ENCODE measurements at regions of chr7 and their contacts with region 1.

Region 1: GRCh38 chr7:102404005-102404861 is 8.1 kb downstream of the PRKRIP1 start:
- DNase-seq: peak; percentile 82
- H3K4me3 ChIP-seq: no peak overlapping the region
- H3K27ac ChIP-seq: no peak overlapping the region
- H3K4me1 ChIP-seq: no peaks in the 10 kb centered on the region
- H3K27me3 ChIP-seq: no peaks in the 10 kb centered on the region
- CTCF ChIP-seq: peak; percentile 79
- EP300 ChIP-seq: no peak
- RAD21 ChIP-seq: peak; percentile 77

Region 2: DNA sequence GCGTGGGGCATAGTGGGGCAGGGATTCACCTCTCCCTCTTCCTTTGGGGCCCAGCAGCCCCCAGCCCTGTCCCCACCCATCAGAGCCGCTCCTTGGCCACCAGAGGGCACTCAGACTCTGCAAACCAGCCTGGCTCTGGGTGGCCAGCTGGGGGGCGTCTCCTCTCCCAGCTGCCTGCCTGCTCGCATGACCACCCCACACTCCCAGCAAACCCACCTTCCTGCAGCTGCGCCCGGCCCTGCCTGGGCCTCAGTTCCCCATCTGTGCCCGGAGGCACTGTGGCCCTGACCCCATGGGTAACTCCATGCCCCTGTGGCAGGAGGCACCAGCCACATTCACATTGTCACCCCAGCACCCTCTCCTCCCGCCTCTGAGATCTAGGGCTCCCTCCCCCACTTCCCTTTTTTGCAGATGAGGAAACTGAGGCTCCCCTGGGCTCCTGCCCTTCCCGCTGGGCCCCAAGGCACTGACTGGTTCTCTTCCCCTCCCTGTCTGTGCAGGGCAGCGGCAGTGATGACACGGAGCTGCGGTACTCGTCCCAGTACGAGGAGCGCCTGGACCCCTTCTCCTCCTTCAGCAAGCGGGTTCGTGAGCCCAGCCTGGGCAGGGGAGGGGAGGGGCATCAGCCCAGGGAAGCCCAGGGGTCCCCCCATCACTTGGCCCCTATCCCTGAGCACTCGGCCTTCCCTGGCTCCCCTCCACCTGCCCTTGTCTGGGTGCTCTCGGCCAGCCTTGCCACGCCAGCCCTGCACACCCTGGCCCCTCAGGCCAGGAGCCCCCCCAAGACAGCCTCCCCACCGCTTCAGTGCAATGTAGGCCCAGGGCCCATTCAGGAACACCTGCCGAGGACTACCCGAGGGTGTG is 124.5 kb before region 1 on chr7:
- CTCF ChIA-PET with region 1: interaction called, 421 read pairs
- POLR2A ChIA-PET with region 1: no interaction called
- DNase-seq: peak; percentile 98
- H3K4me3 ChIP-seq: no peak overlapping the region; a peak in 1 of 4 replicates
- H3K27ac ChIP-seq: no peak overlapping the region; a peak in 1 of 4 replicates
- H3K4me1 ChIP-seq: peaks cover 0 to 6% of the 10 kb centered on the region in 2 experiments; a peak in 1 of 4 replicates
- H3K27me3 ChIP-seq: no peaks in the 10 kb centered on the region
- CTCF ChIP-seq: peak; percentile 99
- EP300 ChIP-seq: no peak
- RAD21 ChIP-seq: peak; percentile 94

Region 3: DNA sequence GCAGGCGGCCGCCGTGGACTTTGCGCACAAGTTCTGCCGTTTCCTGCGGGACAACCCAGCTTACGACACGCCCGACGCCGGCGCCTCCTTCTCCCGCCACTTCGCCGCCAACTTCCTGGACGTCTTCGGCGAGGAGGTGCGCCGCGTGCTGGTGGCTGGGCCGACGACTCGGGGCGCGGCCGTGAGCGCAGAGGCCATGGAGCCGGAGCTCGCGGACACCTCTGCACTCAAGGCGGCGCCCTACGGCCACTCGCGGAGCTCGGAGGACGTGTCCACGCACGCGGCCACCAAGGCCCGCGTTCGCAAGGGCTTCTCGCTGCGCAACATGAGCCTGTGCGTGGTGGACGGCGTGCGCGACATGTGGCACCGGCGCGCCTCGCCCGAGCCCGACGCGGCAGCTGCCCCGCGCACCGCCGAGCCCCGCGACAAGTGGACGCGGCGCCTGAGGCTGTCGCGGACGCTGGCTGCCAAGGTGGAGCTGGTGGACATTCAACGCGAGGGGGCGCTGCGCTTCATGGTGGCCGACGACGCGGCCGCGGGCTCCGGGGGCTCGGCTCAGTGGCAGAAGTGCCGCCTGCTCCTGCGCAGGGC is 103.5 kb before region 1 on chr7:
- CTCF ChIA-PET with region 1: no interaction called
- POLR2A ChIA-PET with region 1: no interaction called
- DNase-seq: no peak
- H3K4me3 ChIP-seq: no peak overlapping the region; a peak in 1 of 4 replicates
- H3K27ac ChIP-seq: no peak overlapping the region
- H3K4me1 ChIP-seq: peaks cover 0 to 5% of the 10 kb centered on the region in 2 experiments; a peak in 1 of 4 replicates
- H3K27me3 ChIP-seq: no peaks in the 10 kb centered on the region
- CTCF ChIP-seq: no peak
- EP300 ChIP-seq: no peak
- RAD21 ChIP-seq: no peak

Region 4: DNA sequence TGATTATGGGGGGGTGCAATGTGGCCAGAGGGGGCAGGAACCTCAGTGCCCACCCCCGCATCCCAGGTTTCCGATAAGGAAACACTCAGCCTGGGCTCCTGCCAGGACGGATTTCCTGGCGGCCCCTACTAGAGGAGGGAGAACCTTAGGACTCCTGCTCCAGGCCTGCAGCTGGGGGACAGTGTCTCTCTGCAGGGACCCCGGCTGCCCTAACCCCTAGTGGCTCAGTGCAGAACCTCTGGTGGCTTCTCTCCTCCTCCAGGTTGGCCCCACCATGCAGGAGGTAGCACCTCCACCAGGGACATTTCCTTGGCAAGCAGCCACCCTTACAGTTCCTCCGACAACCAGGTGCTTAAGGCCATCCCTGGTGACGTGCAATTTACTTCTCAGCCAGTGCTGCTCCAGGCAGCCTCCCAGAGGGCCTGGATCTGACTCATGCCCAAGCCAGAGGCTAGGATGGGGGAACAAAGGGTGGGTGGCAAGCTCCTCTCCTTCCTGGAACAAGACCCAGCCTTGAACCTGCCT is 85.7 kb before region 1 on chr7:
- CTCF ChIA-PET with region 1: no interaction called
- POLR2A ChIA-PET with region 1: no interaction called
- DNase-seq: peak; percentile 59
- H3K4me3 ChIP-seq: no peak overlapping the region
- H3K27ac ChIP-seq: no peak overlapping the region; a peak in 1 of 4 replicates
- H3K4me1 ChIP-seq: peaks cover 0 to 4% of the 10 kb centered on the region in 2 experiments; a peak in 1 of 4 replicates
- H3K27me3 ChIP-seq: no peaks in the 10 kb centered on the region
- CTCF ChIP-seq: no peak
- EP300 ChIP-seq: no peak
- RAD21 ChIP-seq: no peak

Region 5: DNA sequence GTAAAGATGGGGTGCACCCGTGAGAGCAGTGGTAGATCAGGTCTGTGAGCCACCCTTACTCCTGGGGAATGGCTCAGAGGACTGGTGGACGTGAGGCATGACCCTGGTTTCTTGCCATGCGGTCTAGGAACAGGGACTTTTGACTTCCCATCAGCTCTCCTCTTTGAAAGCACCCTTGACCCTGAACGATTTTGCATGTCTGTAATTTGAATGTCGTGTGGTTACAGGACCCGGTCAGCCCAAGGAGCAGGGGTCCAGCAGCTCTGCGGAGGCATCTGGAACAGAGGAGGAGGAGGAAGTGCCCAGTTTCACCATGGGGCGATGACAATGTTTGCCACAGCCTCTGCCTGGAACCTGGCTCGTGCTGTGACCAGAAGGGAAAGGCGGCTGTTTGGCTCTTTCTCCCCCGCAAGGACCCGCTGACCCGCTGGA is 20.6 kb after region 1 on chr7:
- CTCF ChIA-PET with region 1: interaction called, 11 read pairs
- POLR2A ChIA-PET with region 1: no interaction called
- DNase-seq: no peak
- H3K4me3 ChIP-seq: no peak overlapping the region
- H3K27ac ChIP-seq: no peak overlapping the region
- H3K4me1 ChIP-seq: no peaks in the 10 kb centered on the region
- H3K27me3 ChIP-seq: no peaks in the 10 kb centered on the region
- CTCF ChIP-seq: no peak
- EP300 ChIP-seq: no peak
- RAD21 ChIP-seq: no peak

Region 6: DNA sequence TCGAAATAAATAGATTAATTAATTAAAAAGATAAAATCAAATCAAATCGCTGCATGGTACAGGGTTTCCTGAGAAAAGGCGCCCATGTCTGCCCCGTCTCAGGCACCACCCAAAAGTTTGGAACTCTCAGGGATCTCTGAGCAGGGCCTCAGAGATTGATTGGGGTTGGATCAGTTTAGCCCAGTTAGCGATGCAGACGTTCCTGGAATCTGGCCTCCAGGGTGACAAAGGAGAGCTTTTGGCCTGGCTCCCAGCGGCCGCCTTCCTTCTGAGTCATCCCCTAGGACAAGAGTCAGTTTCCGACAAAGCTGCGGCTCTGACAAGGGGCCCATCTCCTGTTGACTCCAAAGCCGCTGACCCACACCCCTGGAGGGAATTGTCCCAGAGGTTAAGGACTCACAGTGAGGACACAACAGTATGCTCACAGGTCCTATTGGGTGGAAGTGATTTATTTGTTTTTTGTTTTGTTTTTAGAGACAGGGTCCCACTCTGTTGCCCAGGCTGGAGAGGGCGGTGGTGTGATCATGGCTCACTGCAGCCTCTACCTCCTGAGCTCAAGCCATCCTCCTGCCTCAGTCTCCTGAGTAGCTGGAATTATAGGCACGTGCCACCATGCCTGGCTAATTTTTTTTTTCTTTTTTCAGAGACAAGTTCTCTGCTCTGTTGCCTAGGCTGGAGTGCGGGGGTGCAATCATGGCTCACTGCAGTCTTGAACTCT is 36.0 kb after region 1 on chr7:
- CTCF ChIA-PET with region 1: interaction called, 30 read pairs
- POLR2A ChIA-PET with region 1: no interaction called
- DNase-seq: peak; percentile 40
- H3K4me3 ChIP-seq: no peak overlapping the region
- H3K27ac ChIP-seq: peak overlapping the region; percentile 41 to 69
- H3K4me1 ChIP-seq: peaks cover 7 to 12% of the 10 kb centered on the region in 2 experiments; a peak in 2 of 4 replicates
- H3K27me3 ChIP-seq: no peaks in the 10 kb centered on the region
- CTCF ChIP-seq: no peak
- EP300 ChIP-seq: no peak; a peak in 1 of 4 replicates
- RAD21 ChIP-seq: no peak

Region 7: DNA sequence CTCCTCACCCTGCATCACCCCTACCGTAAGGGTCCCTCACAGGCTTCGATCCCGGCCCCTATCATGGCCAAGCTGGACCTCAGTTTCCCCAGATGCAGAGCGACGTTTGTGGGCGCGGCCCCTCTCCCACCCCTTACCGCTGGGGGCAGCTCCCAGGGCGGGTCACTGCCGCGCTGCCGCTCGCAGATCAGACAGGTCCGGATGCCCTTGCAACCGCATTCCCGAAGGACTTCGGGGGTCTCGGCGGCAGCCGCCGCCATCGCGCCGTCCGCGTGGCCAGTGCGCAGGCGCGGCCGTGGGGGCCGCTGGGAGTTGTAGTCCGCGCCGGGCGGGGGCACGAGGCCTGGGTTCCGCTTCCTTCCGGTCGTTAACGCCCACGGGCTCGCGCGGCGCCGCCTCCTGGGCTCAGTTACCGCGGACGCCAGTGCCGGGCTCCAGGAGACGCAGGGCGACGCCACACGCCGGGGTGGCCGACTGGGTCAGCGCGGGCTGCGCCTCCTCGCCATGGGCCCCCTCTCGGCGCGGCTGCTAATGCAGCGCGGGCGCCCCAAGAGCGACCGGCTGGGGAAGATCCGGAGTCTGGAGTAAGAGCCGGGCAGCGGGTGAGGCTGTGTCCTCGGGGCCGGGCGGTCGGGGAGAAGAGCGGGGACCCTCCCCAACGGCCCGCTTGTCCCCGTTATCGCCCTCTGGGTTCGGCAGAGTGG is 60.5 kb after region 1 on chr7 and contains the starts of genes ALKBH4 and LRWD1:
- CTCF ChIA-PET with region 1: interaction called, 13 read pairs
- POLR2A ChIA-PET with region 1: no interaction called
- DNase-seq: peak; percentile 100
- H3K4me3 ChIP-seq: peak within 1 kb of the TSS; percentile 86 to 99
- H3K27ac ChIP-seq: peak within 1 kb of the TSS; percentile 67 to 79
- H3K4me1 ChIP-seq: peaks cover 5 to 11% of the 10 kb centered on the region in 2 experiments; a peak in 2 of 4 replicates
- H3K27me3 ChIP-seq: no peaks in the 10 kb centered on the region
- CTCF ChIP-seq: peak; percentile 16; the same call in 1 of the 2 replicates
- EP300 ChIP-seq: no peak; a peak in 2 of 4 replicates
- RAD21 ChIP-seq: no peak
- polyA plus RNA-seq, gene ALKBH4: 13.7 and 18.1 TPM in 2 replicates
- polyA plus RNA-seq, gene LRWD1: 44.9 and 53.2 TPM in 2 replicates

Measured in SK-N-SH (cell line).